Colonic mucosa (tissue), 4 donors: ENCODE measurements at regions of chr6 and their contacts with region 1.

Region 1: GRCh38 chr6:42315991-42316378 is 98.3 kb upstream of the MRPS10 start:
- DNase-seq: peak; percentile 38
- H3K4me3 ChIP-seq: no peak overlapping the region
- H3K27ac ChIP-seq: peak overlapping the region; percentile 44
- H3K4me1 ChIP-seq: peaks cover 3% of the 10 kb centered on the region
- H3K27me3 ChIP-seq: no peaks in the 10 kb centered on the region
- CTCF ChIP-seq: no peak

Region 2: DNA sequence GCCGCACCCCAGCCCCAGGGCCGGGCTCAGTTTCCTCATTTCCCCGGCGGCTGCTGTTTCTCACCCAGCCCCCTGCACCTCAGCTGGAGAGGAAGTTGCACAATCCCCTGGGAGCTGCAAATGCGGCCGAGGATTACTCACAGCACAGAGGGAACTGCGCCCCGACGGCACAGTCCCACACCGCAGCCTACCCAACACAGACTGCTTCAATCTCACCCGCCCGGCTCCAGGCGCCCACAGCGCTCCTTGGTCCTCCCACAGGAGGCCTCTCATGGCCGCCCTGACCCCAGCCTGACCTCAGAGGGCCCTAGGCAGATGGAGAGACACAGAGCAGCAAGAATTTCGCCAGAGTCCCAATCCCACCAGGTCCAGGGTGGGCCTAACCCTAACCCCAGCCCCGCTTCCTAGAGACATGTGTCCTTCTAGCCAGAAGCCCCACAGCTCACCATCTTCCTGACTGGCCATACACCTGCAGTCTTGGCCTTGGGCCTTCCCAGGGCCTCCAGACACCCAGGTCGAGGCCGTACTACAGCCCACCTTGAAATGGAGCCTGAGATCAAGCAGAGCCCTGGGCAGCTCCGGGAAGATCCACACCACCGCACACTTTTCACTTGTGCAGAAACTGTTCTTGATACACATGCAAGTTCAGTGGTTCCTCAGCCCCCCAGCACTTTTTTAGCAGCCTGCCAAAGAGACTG is 592.3 kb before region 1 on chr6:
- intact Hi-C with region 1: no loop called
- DNase-seq: peak; percentile 53
- H3K4me3 ChIP-seq: no peak overlapping the region
- H3K27ac ChIP-seq: peak overlapping the region; percentile 50
- H3K4me1 ChIP-seq: peaks cover 15% of the 10 kb centered on the region
- H3K27me3 ChIP-seq: no peaks in the 10 kb centered on the region
- CTCF ChIP-seq: no peak

Region 3: GRCh38 chr6:42402184-42402583 is 86.2 kb after region 1 on chr6:
- intact Hi-C with region 1: loop called (anchors 10 kb)
- DNase-seq: no peak
- H3K4me3 ChIP-seq: no peak overlapping the region
- H3K27ac ChIP-seq: no peak overlapping the region
- H3K4me1 ChIP-seq: peaks cover 11% of the 10 kb centered on the region
- H3K27me3 ChIP-seq: no peaks in the 10 kb centered on the region
- CTCF ChIP-seq: no peak